ENCODE measurements at regions of chr11 and their contacts with region 1.

Region 1: GRCh38 chr11:13135385-13136271 is 126.5 kb downstream of the RASSF10 start:
- DNase-seq: peak in 6 of 10 donors; percentile 43 to 81 (median 53)
- H3K4me3 ChIP-seq: peak overlapping the region in 19 of 59 donors; percentile 2 to 43 (median 29)
- H3K27ac ChIP-seq: peak overlapping the region in 56 of 59 donors; percentile 10 to 96 (median 86)
- H3K27me3 ChIP-seq: peaks cover 0 to 3% (median 0%) of the 10 kb centered on the region in 45 donors
- CTCF ChIP-seq: peak in 5 of 56 donors; percentile 3 to 18 (median 9)

Region 2: GRCh38 chr11:13098063-13098462 is 37.6 kb before region 1 on chr11:
- intact Hi-C with region 1: loop called in 1 of 2 experiments (anchors 2 kb)
- DNase-seq: peak; percentile 7 to 82 (median 64)
- H3K4me3 ChIP-seq: peak overlapping the region in 3 of 59 donors; percentile 2 to 13 (median 10)
- H3K27ac ChIP-seq: peak overlapping the region in 2 of 59 donors; percentile 15 to 22
- H3K27me3 ChIP-seq: peaks cover 0 to 5% (median 0%) of the 10 kb centered on the region in 45 donors
- CTCF ChIP-seq: peak in 5 of 56 donors; percentile 11 to 19 (median 16)